Activated T-helper 1 cell treated with anti-CD3 and anti-CD28 coated beads, Interleukin-12 subunit alpha, Interleukin-12 subunit beta, Interleukin-2, Interleukin-4 antibody, amounts not matched to agents 30 ng/mL and 10 ng/mL and 1 ng/mL, durations not matched to agents 14 hours and 24 hours and 36 hours (primary cell): ENCODE measurements at regions of chr11 and their contacts with region 1.

Region 1: GRCh38 chr11:124415356-124415923 is 9.2 kb downstream of the OR8B4 start:
- DNase-seq: no peak
- H3K4me3 Mint-ChIP-seq: no peak overlapping the region
- H3K27ac Mint-ChIP-seq: no peak overlapping the region
- H3K4me1 Mint-ChIP-seq: no peaks in the 10 kb centered on the region
- H3K27me3 Mint-ChIP-seq: peaks cover 7% of the 10 kb centered on the region

Region 2: DNA sequence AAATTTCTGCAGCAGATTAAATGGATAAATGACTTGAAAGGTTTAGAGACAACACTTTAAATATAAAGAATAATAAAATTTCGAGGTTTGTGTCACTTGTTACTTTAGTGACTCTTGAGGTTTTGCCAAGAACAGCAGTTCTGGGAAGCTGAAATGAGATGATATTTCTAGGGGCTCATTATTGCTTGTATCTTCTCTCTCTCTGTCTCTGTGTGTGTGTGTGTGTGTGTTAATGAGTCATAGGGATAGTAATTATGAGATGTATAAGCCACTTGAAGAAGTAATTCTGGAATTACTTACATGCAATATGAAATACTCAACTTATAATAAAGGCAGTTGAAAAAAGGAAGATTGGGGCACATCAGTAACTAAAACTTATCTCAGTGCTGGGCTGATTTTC is 364.7 kb before region 1 on chr11:
- intact Hi-C with region 1: no loop called
- DNase-seq: no peak
- H3K4me3 Mint-ChIP-seq: no peak overlapping the region
- H3K27ac Mint-ChIP-seq: no peak overlapping the region
- H3K4me1 Mint-ChIP-seq: no peaks in the 10 kb centered on the region
- H3K27me3 Mint-ChIP-seq: no peaks in the 10 kb centered on the region

Region 3: DNA sequence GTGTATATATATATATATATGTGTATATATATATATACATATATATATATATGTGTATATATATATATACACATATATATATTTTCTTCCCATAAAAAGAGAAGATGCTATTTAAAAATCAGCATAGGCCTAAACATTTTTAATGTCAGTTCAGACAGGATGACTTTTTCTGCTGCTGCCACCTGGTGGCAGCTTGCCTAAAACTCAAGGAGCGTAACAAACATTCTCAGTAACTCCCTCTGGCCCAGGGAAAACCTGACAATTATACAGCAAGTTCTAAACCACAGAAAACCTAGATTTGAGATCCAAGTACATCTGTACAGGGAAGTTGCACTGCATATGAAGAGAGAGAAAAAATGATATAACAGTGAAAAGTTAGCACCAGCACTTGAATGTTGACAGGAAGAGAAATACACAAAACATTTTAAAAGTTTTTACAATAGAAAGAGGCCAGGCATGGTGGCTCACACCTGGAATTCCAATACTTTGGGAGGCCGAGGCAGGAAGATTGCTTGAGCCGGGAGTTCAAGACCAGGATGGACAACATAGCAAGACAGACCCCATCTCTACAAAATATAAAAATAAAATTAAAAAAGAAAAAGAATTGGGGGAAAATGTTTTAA is 170.9 kb after region 1 on chr11:
- intact Hi-C with region 1: loop called (anchors 1 kb)
- DNase-seq: no peak
- H3K4me3 Mint-ChIP-seq: no peak overlapping the region
- H3K27ac Mint-ChIP-seq: no peak overlapping the region
- H3K4me1 Mint-ChIP-seq: no peaks in the 10 kb centered on the region
- H3K27me3 Mint-ChIP-seq: peaks cover 8% of the 10 kb centered on the region